Activated T-helper 1 cell treated with anti-CD3 and anti-CD28 coated beads, Interleukin-12 subunit alpha, Interleukin-12 subunit beta, Interleukin-2, Interleukin-4 antibody, amounts not matched to agents 30 ng/mL and 10 ng/mL and 1 ng/mL, durations not matched to agents 14 hours and 24 hours and 36 hours (primary cell): ENCODE measurements at regions of chr6 and their contacts with region 1.

Region 1: GRCh38 chr6:147202516-147203312 is 1.5 kb upstream of the STXBP5 start:
- DNase-seq: peak; percentile 77
- H3K4me3 Mint-ChIP-seq: peak overlapping the region; percentile 89
- H3K27ac Mint-ChIP-seq: peak overlapping the region; percentile 98
- H3K4me1 Mint-ChIP-seq: peaks cover 39% of the 10 kb centered on the region
- H3K27me3 Mint-ChIP-seq: no peaks in the 10 kb centered on the region

Region 2: DNA sequence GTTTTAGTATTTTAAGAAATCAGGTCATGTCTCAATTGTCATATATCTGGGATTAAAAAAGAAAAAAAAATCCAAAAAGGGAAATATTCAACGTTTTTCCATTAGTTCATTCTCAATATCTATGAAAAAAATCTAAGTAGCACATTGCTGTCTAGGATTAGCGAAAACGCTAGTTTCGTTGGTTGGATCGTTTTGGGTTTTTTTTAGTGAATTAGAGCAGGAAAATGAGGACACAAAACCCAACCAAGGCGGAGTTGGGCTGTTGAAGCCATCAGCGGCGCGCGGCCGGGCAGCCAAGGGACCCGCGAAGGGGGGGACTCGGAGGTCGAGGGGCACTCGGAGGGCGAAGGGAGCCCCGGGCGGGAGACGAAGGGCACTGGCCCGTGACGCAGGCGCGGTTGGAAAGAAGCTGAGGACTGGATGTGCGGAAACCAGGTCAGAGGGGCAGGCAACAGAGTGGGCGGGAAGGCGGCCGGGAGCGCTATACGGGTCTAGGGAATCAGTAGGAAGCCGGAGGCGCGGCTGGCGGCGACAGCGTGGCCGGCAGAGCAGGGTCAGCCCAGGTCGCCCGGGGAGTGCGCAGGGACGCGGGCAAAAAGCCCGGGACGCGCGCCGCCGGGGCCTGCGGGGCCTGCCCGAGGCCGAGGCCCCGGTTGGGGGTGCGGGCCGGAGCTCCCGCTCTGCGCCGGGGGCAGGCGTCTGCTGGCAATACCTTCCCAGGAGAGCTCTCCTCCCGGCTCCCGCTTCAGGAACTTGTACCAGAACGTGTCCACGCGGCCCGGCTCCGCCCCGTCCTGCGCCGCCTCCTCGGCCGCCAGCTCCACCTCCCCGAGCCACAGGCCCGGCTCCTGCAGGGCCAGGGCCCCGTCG is 1468.0 kb before region 1 on chr6:
- intact Hi-C with region 1: loop called (anchors 5 kb)
- DNase-seq: peak; percentile 52
- H3K4me3 Mint-ChIP-seq: peak overlapping the region; percentile 94
- H3K27ac Mint-ChIP-seq: peak overlapping the region; percentile 96
- H3K4me1 Mint-ChIP-seq: peaks cover 26% of the 10 kb centered on the region
- H3K27me3 Mint-ChIP-seq: no peaks in the 10 kb centered on the region

Region 3: DNA sequence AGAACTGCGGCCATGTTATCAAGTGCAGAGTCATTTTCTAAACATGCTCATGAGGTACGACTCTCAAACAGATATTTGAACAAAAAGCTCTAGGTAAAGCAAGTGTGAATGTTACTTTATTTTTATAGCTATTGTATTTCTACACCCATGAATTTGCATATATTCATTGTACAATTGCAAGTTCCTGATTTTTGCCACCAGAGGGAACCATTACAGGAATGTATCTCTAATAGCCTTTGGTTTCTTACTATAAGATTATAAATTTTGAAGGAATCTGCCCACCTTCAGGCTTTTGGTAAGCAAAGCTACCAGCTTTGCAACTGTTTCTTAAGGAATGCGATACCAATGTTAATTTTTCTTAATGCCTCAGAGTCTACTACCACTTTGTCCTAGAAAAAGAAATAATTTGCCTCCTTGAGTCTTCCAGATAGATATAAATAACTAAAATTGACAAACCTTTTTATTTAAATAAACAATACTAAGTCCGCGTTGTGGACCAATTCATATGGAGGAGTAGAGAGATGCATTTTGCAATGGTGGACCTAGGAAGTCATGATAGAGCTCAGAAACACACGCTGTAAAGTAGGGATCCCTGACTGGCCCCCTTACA is 180.3 kb after region 1 on chr6:
- intact Hi-C with region 1: loop called (anchors 10 kb)
- DNase-seq: no peak
- H3K4me3 Mint-ChIP-seq: no peak overlapping the region
- H3K27ac Mint-ChIP-seq: no peak overlapping the region
- H3K4me1 Mint-ChIP-seq: peaks cover 7% of the 10 kb centered on the region
- H3K27me3 Mint-ChIP-seq: no peaks in the 10 kb centered on the region